Sigmoid colon (tissue), 7 donors: ENCODE measurements at regions of chr1 and their contacts with region 1.

Region 1: DNA sequence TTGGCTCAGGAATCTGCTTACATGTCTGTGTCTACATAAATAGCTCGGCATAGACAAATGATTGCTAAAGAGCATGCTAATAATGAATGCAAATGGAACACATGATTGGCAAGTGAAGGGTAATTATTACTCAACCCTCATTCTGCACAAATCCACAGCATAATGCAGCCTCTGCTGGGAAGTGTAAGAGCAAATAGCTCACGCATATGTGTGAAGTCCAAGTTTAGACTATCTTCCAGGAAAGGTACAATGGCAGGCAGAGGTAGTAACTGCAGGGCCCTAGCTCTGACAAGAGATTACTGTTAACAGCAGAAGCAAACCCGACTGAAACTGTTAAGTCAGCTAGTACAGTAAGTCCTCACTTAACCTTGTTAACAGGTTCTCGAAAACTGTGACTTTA is 7.0 kb upstream of the IL6R start:
- DNase-seq: peak; percentile 1
- H3K4me3 ChIP-seq: no peak overlapping the region
- H3K27ac ChIP-seq: no peak overlapping the region
- H3K4me1 ChIP-seq: no peaks in the 10 kb centered on the region
- H3K27me3 ChIP-seq: no peaks in the 10 kb centered on the region
- CTCF ChIP-seq: no peak
- EP300 ChIP-seq: no peak
- POLR2A ChIP-seq: no peak

Region 2: GRCh38 chr1:154463512-154463990 is 65.4 kb after region 1 on chr1:
- intact Hi-C with region 1: no loop called
- DNase-seq: peak; percentile 60
- H3K4me3 ChIP-seq: no peak overlapping the region
- H3K27ac ChIP-seq: peak overlapping the region; percentile 59 to 89 (median 68)
- H3K4me1 ChIP-seq: peaks cover 0 to 44% (median 23%) of the 10 kb centered on the region in 4 donors
- H3K27me3 ChIP-seq: no peaks in the 10 kb centered on the region
- CTCF ChIP-seq: no peak
- EP300 ChIP-seq: no peak
- POLR2A ChIP-seq: no peak

Region 3: GRCh38 chr1:154546264-154547063 is 148.3 kb after region 1 on chr1:
- intact Hi-C with region 1: loop called (anchors 5 kb)
- DNase-seq: peak; percentile 75
- H3K4me3 ChIP-seq: no peak overlapping the region
- H3K27ac ChIP-seq: no peak overlapping the region
- H3K4me1 ChIP-seq: peaks cover 0 to 15% (median 6%) of the 10 kb centered on the region in 4 donors
- H3K27me3 ChIP-seq: peaks cover 0 to 7% (median 0%) of the 10 kb centered on the region in 3 donors
- CTCF ChIP-seq: peak; percentile 39 to 68 (median 54)
- EP300 ChIP-seq: no peak
- POLR2A ChIP-seq: no peak